ENCODE measurements at regions of chr14 and their contacts with region 1.

Region 1: GRCh38 chr14:54805521-54806322 is 96.9 kb downstream of the GCH1 start:
- DNase-seq: peak; percentile 78
- ATAC-seq: peak; percentile 83
- H3K4me3 Mint-ChIP-seq: no peak overlapping the region
- H3K27ac Mint-ChIP-seq: no peak overlapping the region
- H3K4me1 Mint-ChIP-seq: no peaks in the 10 kb centered on the region
- H3K27me3 Mint-ChIP-seq: peaks cover 46% of the 10 kb centered on the region

Region 2: DNA sequence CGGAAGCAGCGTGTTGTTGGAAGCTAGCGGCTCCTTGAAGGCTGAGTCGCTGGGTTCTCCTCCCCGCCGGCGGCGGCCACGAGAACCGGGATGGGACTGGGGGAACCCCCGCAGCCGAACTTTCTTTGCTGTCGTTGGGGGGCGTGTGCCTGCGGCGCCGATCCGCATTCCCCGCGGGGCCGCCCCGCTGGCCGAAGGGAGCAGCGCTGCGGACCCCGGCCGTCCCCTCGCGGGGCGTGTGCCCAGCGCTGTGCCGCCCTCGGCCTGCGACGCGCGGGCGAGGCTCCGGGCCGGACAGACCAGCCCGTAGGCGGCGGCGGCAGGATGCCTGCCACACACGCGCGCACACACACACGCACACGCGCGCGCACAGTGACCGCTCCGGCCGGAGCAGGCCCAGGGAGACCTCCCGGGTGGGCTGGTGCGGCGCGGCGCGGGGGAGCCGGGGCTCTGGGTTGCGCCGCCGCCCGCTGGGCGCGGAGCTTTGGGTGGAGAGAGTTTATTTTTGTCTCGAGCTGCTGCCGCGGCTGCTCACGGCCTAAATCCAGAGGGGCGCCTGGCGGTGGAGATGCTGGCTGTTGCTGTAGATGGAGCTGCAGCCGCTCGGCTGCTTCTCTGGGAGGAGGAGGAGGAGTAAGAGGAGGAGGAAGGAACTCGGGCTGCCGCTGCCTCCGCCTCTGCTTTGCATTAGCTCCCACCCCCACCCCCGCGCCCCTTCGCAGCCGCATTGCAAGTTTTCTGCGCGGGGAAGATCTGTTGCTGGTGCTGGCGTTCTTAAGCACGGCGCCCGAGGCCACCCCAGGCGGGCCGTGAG is 239.1 kb before region 1 on chr14 and contains the start of gene SAMD4A:
- CTCF ChIA-PET with region 1: interaction called, 11 read pairs
- DNase-seq: peak; percentile 67
- ATAC-seq: peak; percentile 38
- H3K4me3 Mint-ChIP-seq: peak within 1 kb of the TSS; percentile 79
- H3K27ac Mint-ChIP-seq: peak within 1 kb of the TSS; percentile 32
- H3K4me1 Mint-ChIP-seq: peaks cover 19% of the 10 kb centered on the region
- H3K27me3 Mint-ChIP-seq: peaks cover 46% of the 10 kb centered on the region
- total RNA-seq, gene SAMD4A: 1.6 to 1.7 TPM

Region 3: GRCh38 chr14:54683882-54684794 is 121.6 kb before region 1 on chr14:
- CTCF ChIA-PET with region 1: interaction called, 10 read pairs
- DNase-seq: no peak
- ATAC-seq: no peak
- H3K4me3 Mint-ChIP-seq: no peak overlapping the region
- H3K27ac Mint-ChIP-seq: no peak overlapping the region
- H3K4me1 Mint-ChIP-seq: peaks cover 22% of the 10 kb centered on the region
- H3K27me3 Mint-ChIP-seq: peaks cover 72% of the 10 kb centered on the region

Region 4: GRCh38 chr14:54722781-54723432 is 82.8 kb before region 1 on chr14:
- CTCF ChIA-PET with region 1: no interaction called
- DNase-seq: no peak
- ATAC-seq: peak; percentile 45
- H3K4me3 Mint-ChIP-seq: no peak overlapping the region
- H3K27ac Mint-ChIP-seq: no peak overlapping the region
- H3K4me1 Mint-ChIP-seq: peaks cover 8% of the 10 kb centered on the region
- H3K27me3 Mint-ChIP-seq: peaks cover 64% of the 10 kb centered on the region

Region 5: GRCh38 chr14:54792288-54792687 is 13.4 kb before region 1 on chr14:
- CTCF ChIA-PET with region 1: interaction called, 22 read pairs
- DNase-seq: no peak
- ATAC-seq: no peak
- H3K4me3 Mint-ChIP-seq: no peak overlapping the region
- H3K27ac Mint-ChIP-seq: no peak overlapping the region
- H3K4me1 Mint-ChIP-seq: no peaks in the 10 kb centered on the region
- H3K27me3 Mint-ChIP-seq: peaks cover 3% of the 10 kb centered on the region

Region 6: DNA sequence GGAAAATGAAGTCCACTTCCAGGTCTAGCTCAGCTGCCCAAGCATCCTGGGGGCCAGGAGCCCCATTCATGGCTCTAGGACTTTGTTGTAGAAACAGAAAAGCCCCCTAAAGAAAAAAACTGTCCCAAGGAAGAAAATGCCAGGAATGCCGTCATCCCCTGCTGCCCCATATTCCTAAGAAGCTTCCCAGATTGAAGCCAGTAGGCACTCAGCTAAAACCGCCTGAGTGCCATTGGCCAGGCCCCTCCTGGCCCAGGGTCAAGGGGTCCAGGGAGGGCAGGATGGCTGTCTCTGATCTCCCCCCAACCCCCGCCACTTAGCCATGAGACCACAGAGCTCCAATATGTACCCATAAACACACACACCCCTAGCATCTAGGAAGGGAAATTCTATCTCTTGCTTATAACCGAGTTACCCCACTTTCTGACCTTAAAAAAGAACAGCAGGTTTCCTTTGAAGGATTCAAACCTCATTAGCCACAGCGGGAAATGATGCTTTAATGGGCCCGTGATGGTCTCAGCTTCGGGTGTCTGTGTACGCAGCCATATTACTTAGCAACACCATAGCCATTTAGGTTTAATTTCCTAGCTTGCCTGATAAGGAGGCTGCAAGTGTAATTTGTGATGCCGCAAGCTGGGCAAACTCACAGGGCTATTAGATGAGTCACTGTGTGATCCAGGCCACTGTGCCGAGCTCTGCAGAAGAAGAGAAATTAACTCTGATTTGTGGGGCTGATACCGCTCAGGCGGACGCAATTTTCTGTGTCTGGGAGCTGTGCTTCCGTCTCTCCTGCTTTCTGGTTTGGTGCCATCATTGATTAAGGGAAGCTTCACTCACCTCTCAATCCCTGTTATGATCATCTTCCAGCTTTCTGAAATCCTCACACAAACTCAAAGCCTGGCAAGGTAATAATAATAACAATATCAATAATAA is 12.7 kb after region 1 on chr14:
- CTCF ChIA-PET with region 1: interaction called, 13 read pairs
- DNase-seq: no peak
- ATAC-seq: no peak
- H3K4me3 Mint-ChIP-seq: no peak overlapping the region
- H3K27ac Mint-ChIP-seq: no peak overlapping the region
- H3K4me1 Mint-ChIP-seq: no peaks in the 10 kb centered on the region
- H3K27me3 Mint-ChIP-seq: peaks cover 5% of the 10 kb centered on the region

Measured in activated CD8-positive, alpha-beta memory T cell treated with anti-CD3 and anti-CD28 coated beads, Interleukin-2, amount 10 ng/mL, durations not matched to agents 7 days and 5 days (primary cell).